AG04449 (cell line): ENCODE measurements at regions of chr14 and their contacts with region 1.

Region 1: GRCh38 chr14:100192672-100193416 is 33.4 kb upstream of the DEGS2 start:
- DNase-seq: peak; percentile 68
- H3K4me3 ChIP-seq: peak overlapping the region; percentile 61
- CTCF ChIP-seq: peak; percentile 97

Region 2: DNA sequence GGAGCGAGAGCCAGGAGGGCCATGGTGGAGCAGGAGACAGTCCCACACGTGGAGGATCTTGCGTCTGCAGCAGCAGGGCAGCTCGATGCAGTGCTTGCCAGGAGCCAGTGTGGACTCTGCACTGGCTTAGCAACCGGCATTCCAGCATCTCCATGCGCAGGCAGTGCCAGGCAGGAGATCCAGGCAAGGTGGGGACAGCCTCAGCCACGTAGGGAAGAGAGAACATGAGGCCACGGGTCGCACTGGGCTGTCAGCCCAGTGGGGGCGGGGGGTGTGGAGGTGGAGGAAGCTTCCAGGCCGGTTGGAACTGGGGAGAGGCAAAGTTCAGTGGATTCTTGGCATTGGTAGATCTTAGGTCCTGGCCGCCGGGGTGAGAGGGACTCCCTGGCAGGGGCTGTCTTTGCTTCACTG is 248.6 kb before region 1 on chr14:
- CTCF ChIA-PET with region 1: no interaction called
- POLR2A ChIA-PET with region 1: no interaction called
- DNase-seq: no peak
- H3K4me3 ChIP-seq: no peak overlapping the region
- CTCF ChIP-seq: no peak

Region 3: GRCh38 chr14:100155042-100155846 is 37.6 kb before region 1 on chr14:
- CTCF ChIA-PET with region 1: interaction called, 14 read pairs
- POLR2A ChIA-PET with region 1: no interaction called
- DNase-seq: no peak
- H3K4me3 ChIP-seq: no peak overlapping the region
- CTCF ChIP-seq: peak; percentile 47

Region 4: DNA sequence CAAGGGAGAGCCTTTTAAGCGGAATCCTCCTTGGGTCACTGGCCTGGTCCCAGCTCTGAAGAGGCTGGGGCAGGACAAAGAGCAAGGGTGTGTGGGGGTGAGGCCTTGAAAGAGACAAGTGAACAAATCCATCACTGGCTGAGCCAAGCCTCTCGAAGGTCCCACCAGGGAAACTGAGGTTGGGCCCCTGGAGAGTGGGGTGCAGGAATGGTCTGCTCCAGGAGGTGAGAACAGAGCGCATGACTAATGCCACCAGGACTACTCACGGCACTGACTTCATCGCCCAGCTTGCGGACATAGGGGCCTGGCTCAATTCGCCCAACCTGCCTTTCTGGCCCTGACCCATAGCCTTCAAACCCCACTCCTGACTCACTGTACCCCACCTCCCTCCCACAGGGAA is 14.2 kb before region 1 on chr14:
- CTCF ChIA-PET with region 1: interaction called, 16 read pairs
- POLR2A ChIA-PET with region 1: no interaction called
- DNase-seq: no peak
- H3K4me3 ChIP-seq: no peak overlapping the region
- CTCF ChIP-seq: no peak

Region 5: DNA sequence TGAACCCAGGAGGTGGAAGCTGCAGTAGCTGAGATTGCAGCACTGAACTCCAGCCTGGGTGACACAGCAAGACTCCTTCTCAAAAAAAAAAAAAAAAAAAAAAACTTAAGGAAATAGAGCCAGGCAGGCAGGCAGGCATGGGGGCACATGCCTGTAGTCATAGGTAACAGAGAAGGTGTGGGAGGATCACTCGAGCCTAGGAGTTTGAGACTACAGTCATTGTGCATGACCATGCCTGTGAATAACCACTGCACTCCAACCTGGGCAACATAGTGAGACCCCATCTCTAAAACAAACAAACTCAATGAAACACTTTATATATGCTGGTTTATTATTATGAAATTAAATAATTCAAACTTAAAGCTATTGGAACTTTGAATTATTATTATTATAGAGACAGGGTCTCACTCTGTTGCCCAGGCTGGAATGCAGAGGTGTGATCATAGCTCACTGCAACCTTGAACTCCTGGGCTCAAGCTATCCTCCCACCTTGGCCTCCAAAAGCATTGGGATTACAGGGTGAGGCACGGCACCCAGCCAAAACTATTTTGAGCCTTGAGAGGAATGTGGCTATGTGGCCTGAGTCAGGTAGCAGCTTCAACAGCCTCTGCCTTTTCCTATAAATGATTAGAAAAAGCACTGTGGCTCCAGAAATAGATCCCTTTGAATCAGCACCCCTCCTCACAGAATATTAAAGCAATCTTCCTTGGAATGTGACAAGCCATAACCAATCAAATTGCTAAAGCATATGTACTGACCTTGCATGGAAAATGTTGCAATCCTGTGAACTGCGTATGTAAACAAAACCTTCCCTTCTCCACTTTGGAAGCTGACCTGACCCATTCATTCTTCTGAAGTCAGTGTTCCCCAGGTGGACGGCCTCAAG is 11.3 kb after region 1 on chr14:
- CTCF ChIA-PET with region 1: interaction called, 28 read pairs
- POLR2A ChIA-PET with region 1: no interaction called
- DNase-seq: no peak
- H3K4me3 ChIP-seq: no peak overlapping the region
- CTCF ChIP-seq: no peak

Region 6: DNA sequence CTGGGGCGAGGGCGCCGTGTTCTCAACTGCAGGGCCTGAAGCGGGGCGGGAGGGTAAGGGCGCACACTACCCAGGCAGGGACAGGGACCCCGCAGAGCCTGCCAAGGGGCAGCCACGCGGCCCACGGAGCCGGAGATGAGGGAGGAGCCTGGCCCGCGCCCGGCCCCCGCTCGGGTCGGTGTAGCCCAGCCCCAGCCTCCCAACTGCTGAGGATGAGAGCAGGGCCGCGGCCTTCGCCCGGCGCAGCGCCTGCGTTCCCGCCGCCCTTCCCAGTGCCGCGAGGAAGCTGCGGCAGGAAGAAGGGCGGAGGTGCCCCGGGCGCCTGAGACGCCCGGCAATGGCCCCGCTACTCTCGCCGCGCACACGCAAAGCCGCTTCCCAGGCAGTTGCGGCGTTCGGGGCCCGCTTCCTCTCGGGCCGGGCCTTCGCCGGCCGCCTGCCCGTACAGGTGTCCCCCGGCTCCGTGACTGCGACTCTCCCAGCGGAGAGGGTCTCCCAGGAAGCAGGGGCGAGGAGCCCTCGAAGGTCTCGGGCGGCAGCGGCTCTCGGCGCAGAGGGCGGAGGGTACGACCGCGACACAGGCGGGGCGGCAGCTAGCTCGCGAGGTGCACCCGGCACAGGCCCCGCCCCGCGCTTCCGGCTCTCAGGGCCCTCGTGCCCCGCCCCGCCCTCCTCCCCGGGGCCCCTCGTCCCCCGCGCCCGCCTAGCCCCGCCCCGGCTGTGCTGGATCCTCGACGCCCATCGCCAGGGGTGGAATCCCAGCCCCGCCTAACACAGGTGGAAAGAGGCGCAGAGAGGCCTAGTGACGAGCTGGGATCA is 21.3 kb after region 1 on chr14:
- CTCF ChIA-PET with region 1: interaction called, 10 read pairs
- POLR2A ChIA-PET with region 1: no interaction called
- DNase-seq: no peak
- H3K4me3 ChIP-seq: peak overlapping the region; percentile 75
- CTCF ChIP-seq: no peak

Region 7: GRCh38 chr14:100221533-100222223 is 28.8 kb after region 1 on chr14:
- CTCF ChIA-PET with region 1: interaction called, 14 read pairs
- POLR2A ChIA-PET with region 1: no interaction called
- DNase-seq: peak; percentile 9
- H3K4me3 ChIP-seq: peak overlapping the region; percentile 55
- CTCF ChIP-seq: no peak

Region 8: DNA sequence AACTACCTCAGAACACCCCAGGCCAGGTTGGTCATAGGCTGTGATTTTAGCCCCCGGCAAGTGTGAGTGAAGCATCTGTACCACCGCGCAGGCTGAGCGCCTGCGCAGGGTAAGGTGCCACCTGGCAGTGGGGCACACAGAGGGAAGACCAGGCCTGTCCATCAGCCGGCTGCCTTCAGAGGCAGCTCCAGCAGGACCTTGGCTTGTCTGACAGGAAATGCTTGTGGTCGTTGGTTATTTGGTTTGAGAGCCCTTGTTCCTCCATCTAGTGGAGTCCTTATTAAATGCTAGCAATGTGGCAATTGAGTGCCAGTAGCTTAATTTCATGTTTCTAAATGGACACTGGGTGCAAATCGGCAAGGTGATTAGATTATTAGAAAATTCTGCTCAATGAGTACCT is 85.9 kb after region 1 on chr14:
- CTCF ChIA-PET with region 1: no interaction called
- POLR2A ChIA-PET with region 1: no interaction called
- DNase-seq: no peak
- H3K4me3 ChIP-seq: no peak overlapping the region
- CTCF ChIP-seq: peak; percentile 23